Posterior vena cava (tissue), 2 donors: ENCODE measurements at regions of chr10 and their contacts with region 1.

Region 1: DNA sequence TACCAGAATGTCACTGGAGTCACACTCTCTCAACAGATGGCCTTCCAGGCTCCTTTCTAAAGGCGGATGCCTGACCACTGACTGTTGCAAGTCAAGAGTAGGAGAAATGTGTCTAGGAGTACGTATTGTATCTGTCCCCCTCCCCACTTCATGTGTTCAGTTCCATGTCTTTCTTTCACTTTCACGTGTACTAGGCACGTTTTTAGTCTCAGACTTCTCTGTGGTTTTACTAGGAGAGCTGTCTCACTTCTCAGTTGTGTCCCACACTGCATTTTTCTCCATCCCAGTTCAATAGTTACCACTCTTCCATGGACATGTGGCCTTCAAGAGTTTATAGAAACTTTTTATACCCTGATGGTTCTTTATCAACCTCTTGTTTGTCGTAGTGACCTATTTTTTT is 893.0 kb downstream of the NRG3 start:
- DNase-seq: no peak

Region 2: DNA sequence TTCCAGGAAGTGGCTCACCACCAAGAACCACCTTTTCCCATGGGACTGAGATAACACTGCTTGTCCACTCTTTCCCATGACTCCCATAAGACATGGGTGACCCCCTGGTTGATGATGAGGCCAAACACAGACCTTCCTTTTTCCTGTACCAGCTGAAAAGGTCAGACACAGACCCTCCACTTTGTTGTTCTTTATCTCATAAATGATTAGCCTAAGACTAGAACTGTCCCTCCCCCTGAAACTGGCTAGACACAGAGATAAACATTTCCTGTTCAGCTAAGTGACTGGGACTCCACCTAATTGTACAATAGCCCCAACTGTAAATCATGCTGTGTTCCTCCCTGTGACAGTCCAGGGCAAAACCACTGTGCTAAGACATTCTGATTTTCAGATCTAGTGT is 901.3 kb before region 1 on chr10:
- intact Hi-C with region 1: loop called in 1 of 2 experiments (anchors 10 kb)
- DNase-seq: no peak